ENCODE measurements at regions of chr19 and their contacts with region 1.

Region 1: GRCh38 chr19:9323919-9324583 is at the start of gene ZNF559:
- DNase-seq: peak; percentile 89
- ATAC-seq: peak; percentile 98
- H3K4me3 ChIP-seq: peak within 1 kb of the TSS; percentile 73 to 80
- H3K27ac ChIP-seq: peak within 1 kb of the TSS; percentile 80
- H3K4me1 ChIP-seq: peaks cover 0 to 16% of the 10 kb centered on the region in 2 experiments; a peak in 2 of 4 replicates
- H3K27me3 ChIP-seq: no peaks in the 10 kb centered on the region
- CTCF ChIP-seq: peak in 2 of 3 experiments; percentile 47 to 50; a peak in 4 of 6 replicates
- POLR2A ChIP-seq: no peak
- RAD21 ChIP-seq: no peak
- total RNA-seq, gene ZNF559: 10.9 TPM

Region 2: DNA sequence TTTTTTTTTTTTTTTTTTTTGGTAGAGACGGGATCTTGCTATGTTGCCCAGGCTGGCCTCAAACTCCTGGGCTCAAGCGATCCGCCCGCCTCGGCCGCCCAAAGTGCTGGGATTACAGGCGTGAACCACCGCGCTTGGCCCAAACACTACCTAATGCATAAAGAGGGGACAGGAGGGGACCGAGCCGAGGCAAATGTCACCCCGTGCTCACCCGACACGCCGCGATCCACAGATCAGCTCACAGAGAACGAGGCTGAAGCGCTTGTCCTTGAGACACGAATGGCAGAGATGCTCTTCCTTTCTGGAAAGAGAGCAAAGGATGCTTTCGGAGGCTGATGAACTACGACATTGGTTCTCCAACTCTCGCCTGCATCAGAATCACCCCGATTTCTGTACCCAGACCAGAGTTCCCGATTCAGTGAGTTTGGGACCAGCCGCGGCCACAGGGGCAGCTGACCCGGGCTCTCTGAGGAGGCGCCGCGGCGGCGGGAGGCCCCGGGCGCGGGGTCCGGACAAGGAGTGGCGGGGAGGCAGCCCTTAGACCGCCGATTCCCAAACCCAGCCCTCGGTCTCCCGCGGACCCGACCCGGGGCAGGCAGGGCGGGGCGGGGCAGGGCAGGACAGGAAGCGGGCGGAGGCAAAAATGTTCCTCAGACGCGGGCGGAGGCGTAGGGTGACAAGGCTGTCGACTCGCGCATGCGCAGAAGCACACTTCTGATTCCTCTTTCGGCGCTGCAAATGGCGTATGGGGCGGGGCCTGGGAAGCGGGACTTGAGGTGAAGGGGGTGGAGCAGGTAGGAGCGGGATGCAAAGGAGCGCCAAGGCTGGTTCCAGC is 14.7 kb before region 1 on chr19 and contains the start of gene ZNF699:
- CTCF ChIA-PET with region 1: interaction called, 4 read pairs
- POLR2A ChIA-PET with region 1: no interaction called
- RAD21 ChIA-PET with region 1: no interaction called
- intact Hi-C with region 1: loop called (anchors 1 kb)
- DNase-seq: peak; percentile 96
- ATAC-seq: peak; percentile 88
- H3K4me3 ChIP-seq: peak within 1 kb of the TSS; percentile 91 to 95
- H3K27ac ChIP-seq: peak within 1 kb of the TSS; percentile 79
- H3K4me1 ChIP-seq: peaks cover 0 to 9% of the 10 kb centered on the region in 2 experiments; a peak in 2 of 4 replicates
- H3K27me3 ChIP-seq: no peaks in the 10 kb centered on the region
- CTCF ChIP-seq: no peak
- POLR2A ChIP-seq: no peak
- RAD21 ChIP-seq: no peak
- total RNA-seq, gene ZNF699: 7.8 TPM

Region 3: DNA sequence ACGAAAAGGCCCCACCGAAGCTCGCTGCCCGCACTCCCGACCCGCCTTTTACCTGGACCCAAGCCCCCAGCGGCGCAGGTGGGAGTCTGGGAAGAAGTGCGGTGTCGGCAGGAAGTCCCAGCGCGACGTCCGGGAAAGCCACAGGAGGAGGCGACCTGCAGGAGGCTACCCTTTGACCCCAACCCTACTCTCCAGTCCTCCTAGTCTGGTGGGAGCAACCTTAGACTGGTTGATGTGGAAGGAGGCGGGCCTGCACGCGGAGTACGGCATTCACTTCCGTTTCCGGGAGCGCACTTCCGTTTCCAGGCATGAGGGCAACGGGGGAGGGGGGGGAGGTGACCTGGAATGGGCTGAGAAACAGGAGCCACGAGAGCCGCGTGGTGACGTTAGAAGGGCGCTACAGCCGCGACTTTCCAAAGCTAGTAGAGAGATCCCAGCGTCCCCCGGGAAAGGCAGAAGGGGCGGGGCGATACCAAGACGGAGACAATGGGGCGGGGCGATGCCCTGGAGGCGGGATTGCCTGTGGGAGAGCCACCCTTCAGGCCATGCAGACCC is 82.8 kb after region 1 on chr19:
- CTCF ChIA-PET with region 1: no interaction called
- POLR2A ChIA-PET with region 1: no interaction called
- RAD21 ChIA-PET with region 1: no interaction called
- intact Hi-C with region 1: no loop called
- DNase-seq: no peak
- ATAC-seq: no peak
- H3K4me3 ChIP-seq: no peak overlapping the region
- H3K27ac ChIP-seq: no peak overlapping the region
- H3K4me1 ChIP-seq: no peaks in the 10 kb centered on the region
- H3K27me3 ChIP-seq: no peaks in the 10 kb centered on the region
- CTCF ChIP-seq: no peak
- POLR2A ChIP-seq: no peak
- RAD21 ChIP-seq: no peak

Measured in HCT116 (cell line).